Activated T-helper 2 cell treated with anti-CD3 and anti-CD28 coated beads, Interferon-gamma antibody, Interleukin-2, Interleukin-4, amounts not matched to agents 10 μg/mL and 5 μg/mL and 100 μg/mL, durations not matched to agents 14 hours and 24 hours and 36 hours (primary cell): ENCODE measurements at regions of chr6 and their contacts with region 1.

Region 1: GRCh38 chr6:129766959-129767728 is 57.2 kb upstream of the ARHGAP18 start:
- DNase-seq: peak; percentile 68
- H3K4me3 Mint-ChIP-seq: peak overlapping the region; percentile 81
- H3K27ac Mint-ChIP-seq: no peak overlapping the region
- H3K4me1 Mint-ChIP-seq: peaks cover 27% of the 10 kb centered on the region
- H3K27me3 Mint-ChIP-seq: peaks cover 64% of the 10 kb centered on the region

Region 2: GRCh38 chr6:129606664-129607063 is 160.5 kb before region 1 on chr6:
- intact Hi-C with region 1: no loop called
- DNase-seq: no peak
- H3K4me3 Mint-ChIP-seq: no peak overlapping the region
- H3K27ac Mint-ChIP-seq: no peak overlapping the region
- H3K4me1 Mint-ChIP-seq: peaks cover 21% of the 10 kb centered on the region
- H3K27me3 Mint-ChIP-seq: no peaks in the 10 kb centered on the region

Region 3: GRCh38 chr6:129748212-129748900 is 18.8 kb before region 1 on chr6:
- intact Hi-C with region 1: loop called (anchors 1 kb)
- DNase-seq: peak; percentile 39
- H3K4me3 Mint-ChIP-seq: peak overlapping the region; percentile 55
- H3K27ac Mint-ChIP-seq: peak overlapping the region; percentile 54
- H3K4me1 Mint-ChIP-seq: peaks cover 44% of the 10 kb centered on the region
- H3K27me3 Mint-ChIP-seq: no peaks in the 10 kb centered on the region

Region 4: GRCh38 chr6:130202782-130203181 is 435.6 kb after region 1 on chr6:
- intact Hi-C with region 1: no loop called
- DNase-seq: no peak
- H3K4me3 Mint-ChIP-seq: no peak overlapping the region
- H3K27ac Mint-ChIP-seq: no peak overlapping the region
- H3K4me1 Mint-ChIP-seq: peaks cover 15% of the 10 kb centered on the region
- H3K27me3 Mint-ChIP-seq: no peaks in the 10 kb centered on the region

Region 5: GRCh38 chr6:130282234-130282995 is 515.3 kb after region 1 on chr6:
- intact Hi-C with region 1: no loop called
- DNase-seq: no peak
- H3K4me3 Mint-ChIP-seq: no peak overlapping the region
- H3K27ac Mint-ChIP-seq: no peak overlapping the region
- H3K4me1 Mint-ChIP-seq: peaks cover 11% of the 10 kb centered on the region
- H3K27me3 Mint-ChIP-seq: no peaks in the 10 kb centered on the region